ENCODE measurements at regions of chr16 and their contacts with region 1.

Region 1: DNA sequence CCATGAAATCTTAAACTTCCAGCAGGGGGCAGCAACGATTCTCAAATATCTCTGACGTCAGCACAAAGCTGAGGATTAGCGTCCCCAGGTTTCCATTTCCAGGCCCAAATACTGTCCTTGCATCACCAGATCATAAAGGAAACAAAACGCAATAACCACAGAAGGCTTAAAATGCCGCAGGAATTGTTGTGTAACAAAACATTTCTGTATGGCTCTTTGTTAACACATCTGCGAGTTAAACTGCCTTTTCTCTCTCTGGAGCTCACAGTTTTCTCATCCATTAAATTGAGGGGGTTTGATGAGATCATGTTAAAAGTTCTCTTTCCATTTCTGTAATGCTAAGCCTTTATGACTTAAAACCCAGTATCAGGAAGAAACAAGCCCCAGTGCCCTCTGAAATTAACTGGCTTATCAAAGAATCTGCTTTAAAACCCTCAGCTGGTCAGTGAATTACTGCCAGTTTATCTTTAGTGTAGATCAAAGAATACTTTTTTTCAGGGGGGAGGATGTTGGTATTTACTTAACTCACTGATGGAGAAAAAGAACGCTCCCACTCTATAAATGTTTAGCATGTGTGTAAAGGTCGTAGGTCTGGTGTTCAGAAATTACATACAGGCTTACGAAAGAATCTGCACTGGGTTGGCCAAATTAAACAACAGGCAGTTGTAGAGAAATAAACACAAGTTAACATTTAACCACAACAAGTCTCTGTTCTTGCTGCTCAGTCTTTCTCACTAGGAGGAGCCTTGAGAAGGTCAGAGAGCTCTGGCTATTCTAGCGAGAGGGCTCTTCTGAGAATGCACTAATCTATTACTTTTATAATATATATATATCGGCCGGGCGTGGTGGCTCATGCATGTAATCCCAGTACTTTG is 10.6 kb upstream of the TERF2 start:
- DNase-seq: peak; percentile 24 to 88 (median 57)
- ATAC-seq: peak; percentile 58 to 78 (median 68)
- H3K4me3 ChIP-seq: no peak overlapping the region
- H3K4me3 Mint-ChIP-seq: no peak overlapping the region
- H3K27ac ChIP-seq: peak overlapping the region; percentile 21
- H3K27ac Mint-ChIP-seq: no peak overlapping the region
- H3K4me1 ChIP-seq: no peaks in the 10 kb centered on the region
- H3K4me1 Mint-ChIP-seq: peaks cover 0 to 6% (median 5%) of the 10 kb centered on the region in 3 donors
- H3K27me3 ChIP-seq: peaks cover 0 to 4% of the 10 kb centered on the region in 2 experiments
- H3K27me3 Mint-ChIP-seq: no peaks in the 10 kb centered on the region

Region 2: GRCh38 chr16:69471121-69471520 is 74.7 kb after region 1 on chr16:
- CTCF ChIA-PET with region 1: no interaction called
- POLR2A ChIA-PET with region 1: no interaction called
- DNase-seq: no peak
- ATAC-seq: peak in 2 of 4 experiments; percentile 44 to 62
- H3K4me3 ChIP-seq: no peak overlapping the region
- H3K4me3 Mint-ChIP-seq: no peak overlapping the region
- H3K27ac ChIP-seq: no peak overlapping the region
- H3K27ac Mint-ChIP-seq: peak overlapping the region; percentile 49 to 70
- H3K4me1 ChIP-seq: peaks cover 0 to 10% of the 10 kb centered on the region in 2 experiments
- H3K4me1 Mint-ChIP-seq: peaks cover 7 to 33% (median 24%) of the 10 kb centered on the region in 3 donors
- H3K27me3 ChIP-seq: no peaks in the 10 kb centered on the region
- H3K27me3 Mint-ChIP-seq: no peaks in the 10 kb centered on the region

Region 3: GRCh38 chr16:69563605-69564580 is 167.5 kb after region 1 on chr16:
- CTCF ChIA-PET with region 1: interaction called, 3 to 16 read pairs
- POLR2A ChIA-PET with region 1: no interaction called
- DNase-seq: peak in 32 of 35 experiments; percentile 6 to 78 (median 24)
- ATAC-seq: peak; percentile 25 to 61 (median 36)
- H3K4me3 ChIP-seq: peak overlapping the region; percentile 17 to 70
- H3K4me3 Mint-ChIP-seq: peak overlapping the region; percentile 92 to 98 (median 93)
- H3K27ac ChIP-seq: peak overlapping the region; percentile 97
- H3K27ac Mint-ChIP-seq: peak overlapping the region; percentile 98 to 99
- H3K4me1 ChIP-seq: peaks cover 18 to 29% of the 10 kb centered on the region in 2 experiments
- H3K4me1 Mint-ChIP-seq: peaks cover 31 to 45% (median 39%) of the 10 kb centered on the region in 3 donors
- H3K27me3 ChIP-seq: no peaks in the 10 kb centered on the region
- H3K27me3 Mint-ChIP-seq: no peaks in the 10 kb centered on the region